ENCODE measurements at regions of chr12 and their contacts with region 1.

Region 1: DNA sequence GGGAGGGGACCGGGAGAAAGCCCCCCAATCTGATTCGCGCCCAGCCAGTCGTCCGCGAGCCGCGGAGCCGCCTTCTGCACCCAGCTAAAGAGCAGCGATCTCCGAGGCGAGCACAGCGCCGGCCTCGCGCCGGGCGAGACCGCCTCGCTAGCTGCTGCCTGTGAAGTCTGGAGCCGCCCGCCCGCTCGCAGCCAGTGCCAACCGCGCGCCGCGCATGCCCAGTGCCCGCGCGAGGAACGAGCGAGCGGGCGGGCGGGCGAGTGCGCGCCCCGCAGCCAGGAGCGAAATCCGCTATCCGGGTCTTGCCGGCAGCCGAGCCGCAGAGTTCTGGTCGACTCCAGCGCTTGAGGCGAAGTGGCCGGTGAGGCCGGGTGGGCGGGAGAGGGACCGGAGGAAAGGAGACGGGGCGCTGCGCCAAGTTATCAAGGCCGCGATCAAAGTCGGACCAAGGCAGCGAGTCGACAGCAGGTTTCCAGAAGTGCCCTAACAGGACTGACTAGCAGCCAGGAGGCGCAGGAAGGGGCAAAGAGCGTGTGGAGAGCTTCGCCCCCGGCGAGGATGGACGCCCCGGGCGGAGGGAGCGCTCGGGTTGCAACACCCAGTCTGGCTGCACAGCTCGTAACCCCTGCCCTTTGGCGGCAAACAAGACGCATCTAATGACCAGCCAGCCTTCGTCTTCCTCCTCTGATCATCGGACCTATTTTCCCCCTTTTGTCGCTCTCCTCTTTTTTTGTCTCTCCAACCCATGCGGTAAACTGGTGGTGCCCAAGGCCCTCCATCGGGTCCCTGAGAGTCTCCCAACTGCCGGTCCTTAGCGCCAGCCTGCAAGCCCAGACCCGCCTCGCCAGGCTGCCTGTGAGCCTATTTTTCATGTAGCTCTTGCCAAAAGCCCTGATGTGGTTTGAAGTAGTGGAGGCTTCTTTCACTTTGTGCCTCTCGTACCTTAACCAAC is at the start of gene EPS8:
- DNase-seq: peak; percentile 78 to 91
- ATAC-seq: peak; percentile 87 to 95
- H3K4me3 ChIP-seq: peak within 1 kb of the TSS; percentile 78
- H3K27ac ChIP-seq: peak within 1 kb of the TSS; percentile 87 to 91
- H3K4me1 ChIP-seq: peaks cover 17% of the 10 kb centered on the region; the same call in 2 of the 3 replicates
- CTCF ChIP-seq: no peak
- EP300 ChIP-seq: no peak
- POLR2A ChIP-seq: peak; percentile 73
- RAD21 ChIP-seq: peak in 1 of 2 experiments; percentile 20; a peak in 3 of 5 replicates
- polyA plus RNA-seq, gene EPS8: 101 and 106 TPM in 2 replicates

Region 2: DNA sequence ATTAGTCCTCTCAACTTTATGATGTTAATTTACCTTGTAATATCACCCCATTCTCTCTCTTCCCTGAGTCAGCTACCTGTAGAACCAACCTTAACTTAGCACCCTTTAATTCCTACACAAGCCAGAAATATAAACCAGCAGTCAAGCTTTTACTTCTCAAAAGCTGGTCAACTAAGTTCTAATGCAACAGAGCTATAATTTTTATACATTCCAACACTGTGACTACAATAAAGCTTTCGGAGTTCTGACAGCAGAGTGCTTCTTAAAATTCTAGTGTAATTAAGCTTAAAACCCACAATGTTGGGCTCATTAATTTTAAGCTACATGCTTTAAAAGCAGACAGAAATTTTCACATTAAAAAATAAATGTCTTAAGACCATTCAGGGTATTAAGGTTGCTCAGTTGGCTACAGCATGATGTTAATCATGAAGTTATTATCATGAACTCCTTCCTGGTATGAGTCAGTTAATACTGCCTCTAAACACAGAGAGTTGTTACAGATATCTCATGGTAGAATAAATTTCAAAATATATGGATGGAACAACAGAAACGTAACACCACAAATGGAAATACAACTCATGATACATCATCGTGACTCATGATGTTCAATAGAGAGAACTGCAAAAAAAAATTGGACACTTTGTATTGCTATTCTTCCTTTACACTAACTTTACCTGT is 127.1 kb before region 1 on chr12:
- CTCF ChIA-PET with region 1: interaction called, 4 read pairs
- POLR2A ChIA-PET with region 1: interaction called, 11 read pairs
- DNase-seq: peak; percentile 78 to 91
- ATAC-seq: peak; percentile 97 to 99
- H3K4me3 ChIP-seq: no peak overlapping the region
- H3K27ac ChIP-seq: peak overlapping the region; percentile 86 to 88
- H3K4me1 ChIP-seq: peaks cover 41% of the 10 kb centered on the region
- CTCF ChIP-seq: no peak
- EP300 ChIP-seq: peak in 1 of 2 experiments; percentile 54; a peak in 1 of 5 replicates
- POLR2A ChIP-seq: no peak
- RAD21 ChIP-seq: no peak; a peak in 1 of 5 replicates

Region 3: GRCh38 chr12:15712823-15713660 is 76.5 kb before region 1 on chr12:
- CTCF ChIA-PET with region 1: interaction called, 3 read pairs
- POLR2A ChIA-PET with region 1: interaction called, 11 read pairs
- DNase-seq: peak in 1 of 2 experiments; percentile 85
- ATAC-seq: peak; percentile 68 to 87
- H3K4me3 ChIP-seq: peak overlapping the region; percentile 42
- H3K27ac ChIP-seq: peak overlapping the region; percentile 80 to 82
- H3K4me1 ChIP-seq: peaks cover 61% of the 10 kb centered on the region
- CTCF ChIP-seq: no peak
- EP300 ChIP-seq: no peak
- POLR2A ChIP-seq: no peak
- RAD21 ChIP-seq: no peak

Region 4: GRCh38 chr12:15939111-15939510 is 149.6 kb after region 1 on chr12:
- CTCF ChIA-PET with region 1: no interaction called
- POLR2A ChIA-PET with region 1: no interaction called
- DNase-seq: no peak
- ATAC-seq: no peak
- H3K4me3 ChIP-seq: no peak overlapping the region
- H3K27ac ChIP-seq: no peak overlapping the region
- H3K4me1 ChIP-seq: no peaks in the 10 kb centered on the region
- CTCF ChIP-seq: no peak
- EP300 ChIP-seq: no peak
- POLR2A ChIP-seq: no peak
- RAD21 ChIP-seq: no peak

Measured in A549 (cell line).